Endothelial cell of umbilical vein (primary cell): ENCODE measurements at regions of chr4 and their contacts with region 1.

Region 1: DNA sequence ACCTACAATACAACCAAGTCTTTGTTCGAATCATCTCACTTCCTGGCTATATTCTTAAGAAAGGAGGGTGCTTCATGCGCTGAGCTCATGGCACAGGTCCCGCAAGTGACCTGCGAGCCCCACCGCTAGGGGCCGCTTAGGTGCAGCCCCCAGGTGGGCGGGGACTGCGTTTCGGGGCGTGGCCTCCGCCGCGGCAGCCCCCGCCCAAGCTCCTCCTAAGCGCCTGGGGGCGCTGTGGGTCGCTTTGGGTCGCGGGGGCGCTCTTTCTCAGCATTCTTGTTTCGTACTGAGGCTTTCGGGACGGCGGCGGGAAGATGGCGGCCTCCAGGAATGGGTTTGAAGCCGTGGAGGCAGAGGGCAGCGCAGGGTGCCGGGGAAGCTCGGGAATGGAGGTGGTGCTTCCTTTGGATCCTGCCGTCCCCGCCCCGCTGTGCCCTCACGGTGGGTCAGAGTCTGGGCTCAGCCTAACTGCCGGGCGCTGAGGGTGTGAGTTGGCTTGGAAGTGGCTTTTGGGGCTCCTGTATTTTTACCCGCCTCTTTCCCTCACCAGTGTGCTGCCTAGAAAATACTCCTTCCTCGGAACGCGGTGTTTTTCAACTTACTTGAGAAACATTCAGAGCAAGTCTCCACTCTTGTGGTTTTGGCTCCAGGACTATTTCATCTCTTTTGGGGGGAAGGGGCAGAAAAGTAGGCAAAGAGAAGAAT is at the start of gene ZCCHC4:
- DNase-seq: peak; percentile 93
- H3K4me3 ChIP-seq: peak within 1 kb of the TSS; percentile 63 to 92 (median 87)
- H3K27ac ChIP-seq: peak within 1 kb of the TSS; percentile 34
- H3K4me1 ChIP-seq: peaks cover 5% of the 10 kb centered on the region
- H3K27me3 ChIP-seq: no peaks in the 10 kb centered on the region
- CTCF ChIP-seq: peak; percentile 100
- POLR2A ChIP-seq: peak; percentile 80
- total RNA-seq, gene ZCCHC4: 9.9 and 10.9 TPM in 2 replicates

Region 2: GRCh38 chr4:24511371-24512063 is 801.1 kb before region 1 on chr4:
- CTCF ChIA-PET with region 1: no interaction called
- POLR2A ChIA-PET with region 1: no interaction called
- dilution Hi-C with region 1: no loop called
- intact Hi-C with region 1: no loop called
- DNase-seq: no peak
- H3K4me3 ChIP-seq: no peak overlapping the region
- H3K27ac ChIP-seq: no peak overlapping the region
- H3K4me1 ChIP-seq: peaks cover 4% of the 10 kb centered on the region
- H3K27me3 ChIP-seq: no peaks in the 10 kb centered on the region
- CTCF ChIP-seq: no peak
- POLR2A ChIP-seq: no peak

Region 3: DNA sequence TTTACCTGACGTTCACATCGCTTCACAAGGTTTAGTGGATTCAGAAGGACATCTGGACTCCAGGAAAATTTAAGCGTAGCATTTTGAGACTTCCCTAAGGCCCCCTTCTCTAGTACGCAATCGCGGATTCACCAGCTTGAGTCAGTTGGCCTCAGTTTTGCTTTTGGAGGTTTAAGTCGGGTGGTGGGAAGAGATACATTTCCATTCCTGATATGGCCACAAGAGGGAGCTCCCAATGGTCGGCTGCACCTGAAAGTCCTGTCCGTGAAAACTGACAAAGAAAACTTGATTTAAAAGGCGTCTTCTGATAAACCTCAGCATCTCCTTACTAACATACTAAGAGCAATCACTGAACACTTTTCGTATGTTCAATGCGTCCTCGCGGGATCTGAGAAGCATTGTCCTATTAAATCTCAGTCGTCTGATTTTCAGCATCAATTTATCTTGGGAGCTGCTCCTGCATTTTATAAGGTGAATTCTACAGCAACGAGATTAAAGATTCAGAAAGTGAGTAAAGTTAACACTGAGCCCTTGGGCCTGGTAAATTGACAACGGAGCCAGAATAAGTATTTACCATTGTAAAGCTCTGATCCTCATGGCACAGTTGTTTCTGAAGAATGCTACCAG is 332.5 kb before region 1 on chr4:
- CTCF ChIA-PET with region 1: interaction called, 10 read pairs
- POLR2A ChIA-PET with region 1: no interaction called
- dilution Hi-C with region 1: no loop called
- intact Hi-C with region 1: loop called (anchors 1 kb)
- DNase-seq: peak; percentile 90
- H3K4me3 ChIP-seq: peak overlapping the region in 2 of 3 experiments; percentile 2 to 53
- H3K27ac ChIP-seq: peak overlapping the region; percentile 91
- H3K4me1 ChIP-seq: peaks cover 17% of the 10 kb centered on the region
- H3K27me3 ChIP-seq: peaks cover 0 to 2% of the 10 kb centered on the region in 2 experiments
- CTCF ChIP-seq: peak; percentile 82 to 85
- POLR2A ChIP-seq: peak; percentile 8

Region 4: GRCh38 chr4:25103418-25103817 is 209.2 kb before region 1 on chr4:
- CTCF ChIA-PET with region 1: no interaction called
- POLR2A ChIA-PET with region 1: no interaction called
- dilution Hi-C with region 1: no loop called
- intact Hi-C with region 1: no loop called
- DNase-seq: no peak
- H3K4me3 ChIP-seq: no peak overlapping the region
- H3K27ac ChIP-seq: no peak overlapping the region
- H3K4me1 ChIP-seq: no peaks in the 10 kb centered on the region
- H3K27me3 ChIP-seq: peaks cover 0 to 3% of the 10 kb centered on the region in 2 experiments
- CTCF ChIP-seq: no peak
- POLR2A ChIP-seq: no peak

Region 5: DNA sequence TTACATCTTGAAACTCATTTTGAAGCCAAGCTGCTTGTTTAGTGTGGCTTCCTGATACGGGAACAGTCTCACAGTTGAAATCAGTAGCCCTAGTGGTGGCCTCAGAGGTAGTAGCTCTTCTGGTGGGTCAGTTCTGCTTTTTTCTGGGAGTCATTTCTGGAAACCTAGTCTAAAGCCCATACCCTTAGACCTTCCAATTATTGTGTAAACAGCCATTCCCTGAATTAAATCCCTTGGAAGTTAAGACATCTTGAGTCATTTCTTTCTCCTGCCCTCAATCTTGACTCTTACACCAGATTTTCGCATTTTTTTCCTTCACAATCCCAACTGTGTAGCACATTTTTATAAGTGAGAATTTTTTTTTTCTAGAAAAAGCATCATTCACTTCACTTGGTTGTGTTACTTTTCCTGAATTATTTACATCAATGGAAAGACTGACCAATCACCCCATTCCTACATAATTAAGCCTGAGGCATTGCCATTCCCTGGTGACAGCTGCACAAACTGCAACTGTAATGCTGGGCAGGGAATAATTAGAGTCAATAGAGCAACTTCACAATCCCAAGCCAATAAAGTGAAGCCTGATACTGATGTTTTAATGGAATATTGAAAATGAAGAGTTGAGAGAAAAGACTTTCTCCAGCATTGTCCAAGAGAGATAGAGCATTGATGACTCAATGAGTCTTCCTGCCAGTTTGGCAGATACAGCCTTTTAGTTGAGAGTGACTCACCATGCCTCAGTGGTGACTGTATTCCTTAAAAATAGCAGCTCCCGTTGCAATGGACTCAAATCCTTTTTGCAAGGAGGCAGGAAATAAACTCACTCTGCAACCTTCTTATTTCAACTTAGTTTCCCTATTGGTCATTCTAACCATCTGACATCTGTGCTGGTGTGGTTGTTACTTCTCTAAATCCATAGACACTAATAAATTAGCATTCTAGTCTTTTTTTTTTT is 139.4 kb before region 1 on chr4:
- CTCF ChIA-PET with region 1: interaction called, 15 read pairs
- POLR2A ChIA-PET with region 1: no interaction called
- dilution Hi-C with region 1: no loop called
- intact Hi-C with region 1: no loop called
- DNase-seq: peak; percentile 91
- H3K4me3 ChIP-seq: no peak overlapping the region
- H3K27ac ChIP-seq: peak overlapping the region; percentile 41
- H3K4me1 ChIP-seq: peaks cover 16% of the 10 kb centered on the region
- H3K27me3 ChIP-seq: no peaks in the 10 kb centered on the region
- CTCF ChIP-seq: no peak
- POLR2A ChIP-seq: no peak

Region 6: DNA sequence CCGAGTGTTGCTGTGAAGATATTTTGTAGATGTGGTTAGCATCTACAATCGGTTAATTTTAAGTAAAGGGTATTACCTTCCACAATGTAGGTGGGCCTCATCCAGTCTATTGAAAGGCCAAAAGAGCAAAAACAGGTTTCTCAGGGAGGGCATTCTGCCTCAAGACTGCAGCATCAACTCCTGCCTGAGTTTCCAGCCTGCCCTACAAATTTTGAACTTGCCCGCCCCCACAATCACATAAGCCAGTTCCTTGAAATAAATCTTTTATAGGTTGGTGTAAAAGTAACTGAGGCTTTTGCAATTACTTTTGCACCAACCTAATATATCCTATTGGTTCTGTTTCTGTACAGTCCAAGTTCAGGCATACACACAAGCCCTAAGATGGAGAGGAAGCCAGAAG is 100.9 kb before region 1 on chr4:
- CTCF ChIA-PET with region 1: no interaction called
- POLR2A ChIA-PET with region 1: no interaction called
- dilution Hi-C with region 1: no loop called
- intact Hi-C with region 1: no loop called
- DNase-seq: no peak
- H3K4me3 ChIP-seq: no peak overlapping the region
- H3K27ac ChIP-seq: no peak overlapping the region
- H3K4me1 ChIP-seq: no peaks in the 10 kb centered on the region
- H3K27me3 ChIP-seq: peaks cover 3 to 12% of the 10 kb centered on the region in 2 experiments
- CTCF ChIP-seq: no peak
- POLR2A ChIP-seq: no peak

Region 7: GRCh38 chr4:25234390-25235370 is 78.0 kb before region 1 on chr4:
- CTCF ChIA-PET with region 1: interaction called, 71 read pairs
- POLR2A ChIA-PET with region 1: no interaction called
- dilution Hi-C with region 1: no loop called
- intact Hi-C with region 1: loop called (anchors 1 kb)
- DNase-seq: peak; percentile 92
- H3K4me3 ChIP-seq: peak overlapping the region; percentile 49 to 77 (median 57)
- H3K27ac ChIP-seq: peak overlapping the region; percentile 62
- H3K4me1 ChIP-seq: peaks cover 8% of the 10 kb centered on the region
- H3K27me3 ChIP-seq: no peaks in the 10 kb centered on the region
- CTCF ChIP-seq: peak; percentile 20 to 37
- POLR2A ChIP-seq: no peak

Region 8: GRCh38 chr4:25299480-25300188 is 13.0 kb before region 1 on chr4:
- CTCF ChIA-PET with region 1: interaction called, 10 read pairs
- POLR2A ChIA-PET with region 1: no interaction called
- dilution Hi-C with region 1: no loop called
- intact Hi-C with region 1: no loop called
- DNase-seq: no peak
- H3K4me3 ChIP-seq: no peak overlapping the region
- H3K27ac ChIP-seq: no peak overlapping the region
- H3K4me1 ChIP-seq: no peaks in the 10 kb centered on the region
- H3K27me3 ChIP-seq: peaks cover 4 to 15% of the 10 kb centered on the region in 2 experiments
- CTCF ChIP-seq: no peak
- POLR2A ChIP-seq: no peak

Region 9: GRCh38 chr4:25351777-25352416 is 39.2 kb after region 1 on chr4:
- CTCF ChIA-PET with region 1: interaction called, 13 read pairs
- POLR2A ChIA-PET with region 1: no interaction called
- dilution Hi-C with region 1: no loop called
- intact Hi-C with region 1: no loop called
- DNase-seq: peak; percentile 27
- H3K4me3 ChIP-seq: no peak overlapping the region
- H3K27ac ChIP-seq: no peak overlapping the region
- H3K4me1 ChIP-seq: peaks cover 6% of the 10 kb centered on the region
- H3K27me3 ChIP-seq: no peaks in the 10 kb centered on the region
- CTCF ChIP-seq: no peak
- POLR2A ChIP-seq: no peak

Region 10: GRCh38 chr4:25367004-25367621 is 54.5 kb after region 1 on chr4:
- CTCF ChIA-PET with region 1: interaction called, 69 read pairs
- POLR2A ChIA-PET with region 1: interaction called, 3 read pairs
- dilution Hi-C with region 1: no loop called
- intact Hi-C with region 1: loop called (anchors 1 kb)
- DNase-seq: peak; percentile 63
- H3K4me3 ChIP-seq: no peak overlapping the region
- H3K27ac ChIP-seq: no peak overlapping the region
- H3K4me1 ChIP-seq: no peaks in the 10 kb centered on the region
- H3K27me3 ChIP-seq: no peaks in the 10 kb centered on the region
- CTCF ChIP-seq: peak; percentile 24 to 34
- POLR2A ChIP-seq: no peak